ENCODE measurements at regions of chr7 and their contacts with region 1.

Region 1: GRCh38 chr7:138886501-138886917 is 88.5 kb upstream of the ATP6V0A4 start:
- H3K4me3 ChIP-seq: no peak overlapping the region
- H3K27ac ChIP-seq: no peak overlapping the region
- H3K4me1 ChIP-seq: peaks cover 17% of the 10 kb centered on the region
- CTCF ChIP-seq: 0 out of 2 replicates have a peak, but pooled peaks have one; percentile 24

Region 2: DNA sequence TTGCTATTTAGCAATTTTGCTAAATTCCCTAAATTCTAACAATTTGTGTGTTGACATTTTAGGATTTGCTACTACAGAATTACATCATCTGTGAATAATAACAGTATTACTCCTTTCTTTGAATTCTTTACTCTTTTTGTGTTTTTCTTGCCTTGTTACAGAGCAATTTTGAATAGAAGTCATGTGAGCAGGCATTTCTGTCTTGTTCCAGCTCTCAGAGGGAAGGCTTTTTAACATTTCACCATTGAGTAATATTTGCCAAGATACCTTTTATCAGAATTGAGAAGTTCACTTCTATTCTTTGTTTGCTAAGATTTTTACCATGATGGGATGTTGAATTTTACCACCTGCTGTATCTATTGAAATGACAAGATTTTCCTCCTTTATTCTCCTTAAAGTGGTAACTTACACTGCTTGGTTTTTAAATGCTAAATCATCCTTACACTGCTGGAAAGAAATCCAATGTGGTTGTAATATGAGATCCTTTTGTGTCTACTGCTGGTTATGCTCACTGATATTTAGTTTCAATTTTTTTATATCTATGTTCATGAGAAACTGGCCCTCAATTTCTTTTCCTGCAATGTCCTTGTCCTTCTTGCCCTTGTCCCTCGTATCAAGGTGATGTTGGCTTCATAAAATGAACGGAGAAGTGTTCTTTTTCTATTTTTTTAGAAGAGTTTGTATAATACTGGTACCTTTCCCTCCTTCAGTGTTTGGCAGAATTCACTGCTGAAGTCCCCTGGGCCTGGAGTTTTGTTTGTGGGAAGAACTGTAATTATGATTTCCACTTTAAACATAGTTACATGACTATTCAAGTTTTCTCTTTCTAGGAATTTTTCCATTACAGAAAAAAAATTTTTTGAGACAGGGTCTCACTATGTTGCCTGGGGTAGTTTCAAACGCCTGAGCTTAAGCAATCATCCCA is 38.2 kb before region 1 on chr7:
- CTCF ChIA-PET with region 1: no interaction called
- POLR2A ChIA-PET with region 1: no interaction called
- H3K4me3 ChIP-seq: no peak overlapping the region
- H3K27ac ChIP-seq: no peak overlapping the region
- H3K4me1 ChIP-seq: no peaks in the 10 kb centered on the region
- CTCF ChIP-seq: no peak

Region 3: GRCh38 chr7:138875794-138876193 is 10.7 kb before region 1 on chr7:
- CTCF ChIA-PET with region 1: interaction called, 20 read pairs
- POLR2A ChIA-PET with region 1: no interaction called
- H3K4me3 ChIP-seq: no peak overlapping the region
- H3K27ac ChIP-seq: no peak overlapping the region
- H3K4me1 ChIP-seq: no peaks in the 10 kb centered on the region
- CTCF ChIP-seq: no peak

Measured in HEK293 (cell line).